Ascending aorta (tissue), 2 donors: ENCODE measurements at regions of chr9 and their contacts with region 1.

Region 1: DNA sequence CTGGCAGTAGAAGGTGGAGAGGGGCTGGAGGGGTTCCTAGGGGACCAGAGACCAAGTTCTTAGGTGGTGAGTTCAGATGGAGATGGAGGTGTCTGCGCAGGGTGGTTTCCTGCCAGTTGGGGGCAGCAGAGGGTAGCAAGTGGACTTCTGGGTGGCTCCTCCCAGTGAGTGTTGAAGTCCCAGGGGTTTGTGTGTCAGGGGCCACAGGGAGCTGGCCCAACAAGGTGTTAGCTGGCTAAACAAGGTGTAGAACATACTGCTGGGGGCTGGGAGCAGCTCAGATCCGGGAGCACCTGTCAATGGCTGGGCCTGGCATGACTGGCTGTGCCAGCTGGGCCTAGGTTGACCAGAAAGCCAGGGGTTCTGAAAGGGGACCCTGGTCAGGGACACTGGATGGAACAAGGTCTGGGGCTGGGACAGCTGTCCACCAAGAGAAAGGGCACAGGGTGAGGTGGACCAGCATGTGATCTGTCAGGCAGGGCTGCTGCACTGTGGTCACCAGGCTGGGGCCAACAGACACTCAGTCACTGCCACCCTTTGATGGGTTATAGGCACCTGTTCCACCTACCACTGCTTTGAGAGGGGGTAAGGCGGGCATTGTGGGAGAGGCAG is 35.6 kb downstream of the DAB2IP start:
- DNase-seq: peak; percentile 45 to 85
- H3K4me3 ChIP-seq: no peak overlapping the region
- H3K27ac ChIP-seq: no peak overlapping the region
- H3K4me1 ChIP-seq: peaks cover 0 to 2% of the 10 kb centered on the region in 2 donors
- H3K27me3 ChIP-seq: no peaks in the 10 kb centered on the region
- CTCF ChIP-seq: peak; percentile 79 to 95 (median 85)

Region 2: DNA sequence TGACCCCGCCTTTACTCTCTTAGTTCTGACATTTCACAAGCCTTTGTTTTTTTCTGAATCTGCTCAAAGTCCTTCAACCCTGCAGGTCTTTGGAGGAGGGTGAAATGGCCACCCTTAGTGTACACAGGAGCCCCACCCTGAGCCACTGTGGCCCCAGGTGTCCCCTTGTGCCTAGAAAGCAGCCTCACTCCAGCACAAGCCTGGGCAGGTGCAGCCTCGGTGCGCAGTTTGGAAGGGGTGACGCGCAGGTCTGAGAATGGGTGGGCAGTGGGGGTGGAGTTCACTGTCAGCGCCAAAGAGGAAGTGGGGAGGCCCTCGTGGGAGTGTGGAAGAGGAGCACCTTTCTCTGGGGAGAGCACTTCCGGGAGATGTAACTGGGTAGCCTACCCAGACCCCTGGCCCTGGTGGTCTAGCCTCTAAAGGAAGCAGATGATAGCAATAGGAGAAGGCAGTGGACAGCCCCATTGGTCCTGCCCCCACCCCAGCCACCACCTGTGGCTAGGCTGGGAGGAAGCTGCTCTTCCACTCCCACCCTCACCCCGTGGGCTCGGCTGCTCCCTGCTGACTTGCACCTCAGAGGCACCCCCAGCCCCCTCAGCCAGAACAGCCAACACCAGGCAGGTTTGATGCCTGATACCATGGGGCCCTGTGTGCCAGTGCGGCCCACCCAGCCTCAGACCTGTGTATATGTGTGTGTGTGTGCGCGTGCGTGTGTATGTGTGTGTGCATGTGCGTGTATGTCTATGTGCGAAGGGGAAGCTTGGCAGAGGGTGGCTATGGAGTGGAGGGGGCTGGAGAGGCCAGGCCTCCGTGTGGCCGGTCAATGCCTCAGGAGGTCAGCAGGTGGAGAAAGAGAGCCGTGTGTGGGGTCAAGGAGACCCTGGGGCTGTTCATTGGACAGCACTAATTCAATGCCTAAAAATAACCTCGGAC is 52.4 kb before region 1 on chr9:
- intact Hi-C with region 1: loop called (anchors 5 kb)
- DNase-seq: no peak
- H3K4me3 ChIP-seq: no peak overlapping the region
- H3K27ac ChIP-seq: no peak overlapping the region
- H3K4me1 ChIP-seq: peaks cover 0 to 16% of the 10 kb centered on the region in 2 donors
- H3K27me3 ChIP-seq: no peaks in the 10 kb centered on the region
- CTCF ChIP-seq: peak in 2 of 3 experiments; percentile 38 to 40

Region 3: DNA sequence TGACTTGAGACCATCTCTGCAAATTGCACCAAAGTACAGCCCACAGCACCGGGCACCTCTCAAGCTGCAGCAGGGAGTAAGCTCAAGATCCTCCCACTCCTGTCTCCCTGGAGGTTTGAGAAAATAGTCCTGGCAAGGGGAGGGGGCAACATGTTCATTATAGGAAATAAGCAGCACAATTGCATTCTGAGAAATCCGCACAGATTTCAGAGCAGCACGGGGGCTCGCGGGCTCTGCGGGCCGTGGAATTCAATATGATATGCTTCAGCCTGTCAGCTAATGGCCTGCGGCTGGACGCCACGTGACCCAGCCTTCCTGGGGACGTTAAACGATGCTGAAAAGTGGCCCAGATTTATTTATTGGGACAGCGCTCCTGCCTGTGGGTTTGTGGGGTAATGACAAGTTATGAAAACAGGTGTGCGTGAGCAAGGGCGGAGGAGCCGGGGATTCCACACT is 120.8 kb after region 1 on chr9:
- intact Hi-C with region 1: loop called (anchors 2 kb)
- DNase-seq: no peak
- H3K4me3 ChIP-seq: no peak overlapping the region
- H3K27ac ChIP-seq: no peak overlapping the region
- H3K4me1 ChIP-seq: no peaks in the 10 kb centered on the region
- H3K27me3 ChIP-seq: no peaks in the 10 kb centered on the region
- CTCF ChIP-seq: peak in 1 of 3 experiments; percentile 21

Region 4: GRCh38 chr9:121992571-121993212 is 305.7 kb after region 1 on chr9:
- intact Hi-C with region 1: loop called (anchors 1 kb)
- DNase-seq: peak in 1 of 2 donors; percentile 76
- H3K4me3 ChIP-seq: no peak overlapping the region
- H3K27ac ChIP-seq: no peak overlapping the region
- H3K4me1 ChIP-seq: peaks cover 0 to 1% of the 10 kb centered on the region in 2 donors
- H3K27me3 ChIP-seq: no peaks in the 10 kb centered on the region
- CTCF ChIP-seq: peak; percentile 75 to 79 (median 78)